Heart left ventricle (tissue), 16 donors: ENCODE measurements at regions of chr4 and their contacts with region 1.

Region 1: GRCh38 chr4:2963175-2963965 is at the starts of genes GRK4 and NOP14:
- DNase-seq: peak; percentile 98 to 99 (median 99)
- ATAC-seq: peak; percentile 97 to 99 (median 98)
- H3K4me3 ChIP-seq: peak within 1 kb of the TSS; percentile 70 to 100 (median 84)
- H3K27ac ChIP-seq: peak within 1 kb of the TSS; percentile 60 to 92 (median 85)
- H3K4me1 ChIP-seq: peaks cover 4 to 30% (median 23%) of the 10 kb centered on the region in 12 donors
- H3K27me3 ChIP-seq: no peaks in the 10 kb centered on the region
- CTCF ChIP-seq: peak in 9 of 12 donors; percentile 3 to 72 (median 37)
- POLR2A ChIP-seq: peak in 1 of 2 donors; percentile 67
- total RNA-seq, gene GRK4: 4.9 to 11.8 (median 9.3) TPM
- total RNA-seq, gene NOP14: 11.4 to 21.5 (median 15.8) TPM

Region 2: DNA sequence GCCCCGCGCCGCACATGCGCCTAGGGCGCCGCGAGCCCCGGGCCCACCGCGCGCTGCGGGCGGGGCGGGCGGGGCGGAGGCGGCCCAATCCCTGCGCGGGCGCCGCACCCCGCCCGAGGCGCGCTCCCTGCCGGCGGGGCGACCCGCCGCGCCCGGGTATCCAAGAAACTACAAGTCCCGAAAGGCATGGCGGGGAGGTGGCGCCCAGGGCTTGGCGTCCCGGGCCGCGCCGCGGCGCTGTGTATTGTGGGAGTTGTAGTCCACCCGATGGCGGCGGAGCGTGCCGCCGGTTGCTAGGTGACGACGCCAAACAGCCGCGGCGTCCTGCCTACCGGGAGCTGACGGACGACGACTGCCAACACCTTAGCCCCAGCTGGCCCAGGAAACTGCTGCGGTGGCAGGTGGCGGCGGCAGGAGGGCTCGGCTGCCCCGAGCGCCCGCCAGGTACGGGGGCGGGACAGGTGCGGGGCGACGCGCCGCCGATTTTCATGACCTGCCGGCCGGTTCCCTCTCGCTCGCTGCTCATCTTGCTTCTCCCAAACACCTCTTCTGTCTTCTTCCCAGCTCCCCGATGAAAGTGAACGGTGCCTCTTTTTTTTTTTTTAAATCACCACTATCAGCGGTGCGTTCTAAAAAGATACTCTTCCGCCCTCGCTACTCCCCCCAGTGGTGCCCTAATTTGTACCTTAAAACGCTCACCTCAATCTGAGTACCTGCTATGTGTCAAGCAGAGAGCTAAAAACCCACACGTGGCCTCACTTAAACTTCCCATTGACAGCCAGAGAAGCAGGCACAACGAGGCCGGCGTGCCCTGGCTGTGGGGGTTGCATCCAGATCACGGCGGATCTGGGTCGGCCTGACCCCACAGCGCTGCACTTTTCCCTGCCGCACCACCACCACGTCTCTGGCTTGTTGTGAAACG is 544.5 kb before region 1 on chr4 and contains the start of gene CFAP99:
- intact Hi-C with region 1: loop called in 3 of 10 experiments (anchors 5 to 10 kb)
- DNase-seq: peak; percentile 97 to 99 (median 98)
- ATAC-seq: peak; percentile 95 to 98 (median 96)
- H3K4me3 ChIP-seq: peak within 1 kb of the TSS; percentile 48 to 84 (median 70)
- H3K27ac ChIP-seq: peak within 1 kb of the TSS in 7 of 12 donors; percentile 15 to 39 (median 24)
- H3K4me1 ChIP-seq: peaks cover 5 to 42% (median 22%) of the 10 kb centered on the region in 12 donors
- H3K27me3 ChIP-seq: peaks cover 0 to 41% (median 16%) of the 10 kb centered on the region in 9 donors
- CTCF ChIP-seq: peak in 7 of 12 donors; percentile 6 to 45 (median 23)
- POLR2A ChIP-seq: peak in 1 of 2 donors; percentile 3
- total RNA-seq, gene CFAP99: not detected

Region 3: DNA sequence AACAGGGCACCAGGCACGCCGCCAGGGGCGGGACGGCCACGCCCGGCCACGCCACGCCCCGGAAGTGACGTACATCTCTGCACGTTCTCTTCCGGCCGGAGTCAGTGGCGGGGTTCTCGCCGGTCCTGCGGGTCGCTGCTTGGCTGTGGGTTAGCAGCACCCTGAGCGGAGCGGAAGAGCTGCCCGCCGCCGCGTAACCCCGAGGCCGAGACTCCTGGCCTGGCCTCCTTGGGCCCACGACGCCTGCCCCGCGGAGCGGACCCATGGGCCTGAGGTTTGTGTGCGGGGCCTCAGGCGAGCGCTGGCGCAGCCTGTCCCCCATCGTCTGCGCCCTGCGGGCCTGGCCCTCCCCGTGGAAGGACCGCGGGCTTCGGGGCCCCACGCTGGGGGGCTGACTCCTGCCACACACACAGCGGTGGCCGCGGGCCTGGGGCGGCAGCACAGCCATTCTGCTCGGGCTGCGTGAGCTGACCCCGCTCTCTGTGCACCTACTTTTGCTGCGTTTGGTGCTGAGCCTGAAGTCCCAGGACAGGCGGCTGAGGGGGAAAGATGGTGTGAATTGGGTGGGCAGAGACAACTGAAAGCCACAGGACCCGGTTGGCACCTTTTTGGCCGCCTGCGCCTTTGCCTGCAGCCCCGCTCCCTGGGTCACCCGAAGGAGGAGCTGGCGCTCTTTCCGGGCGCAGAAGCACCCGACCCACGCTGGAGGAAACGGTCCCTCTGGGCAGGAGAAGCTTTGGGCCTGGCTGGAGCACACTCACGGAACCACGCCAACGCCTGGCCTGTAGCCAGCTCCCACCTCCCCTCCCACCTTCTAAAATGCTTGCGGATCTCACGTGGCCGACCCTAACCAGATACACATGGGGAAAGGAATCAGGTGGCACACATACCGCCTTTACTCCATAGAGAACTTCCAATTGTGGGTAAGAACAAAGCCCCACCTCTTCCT is 28.3 kb before region 1 on chr4:
- intact Hi-C with region 1: loop called in 1 of 10 experiments (anchors 2 kb)
- DNase-seq: peak; percentile 94 to 98 (median 96)
- ATAC-seq: peak; percentile 54 to 84 (median 83)
- H3K4me3 ChIP-seq: peak overlapping the region; percentile 76 to 100 (median 89)
- H3K27ac ChIP-seq: peak overlapping the region; percentile 68 to 96 (median 88)
- H3K4me1 ChIP-seq: peaks cover 2 to 63% (median 42%) of the 10 kb centered on the region in 12 donors
- H3K27me3 ChIP-seq: no peaks in the 10 kb centered on the region
- CTCF ChIP-seq: peak in 2 of 12 donors; percentile 1 to 26
- POLR2A ChIP-seq: peak; percentile 24 to 92

Region 4: DNA sequence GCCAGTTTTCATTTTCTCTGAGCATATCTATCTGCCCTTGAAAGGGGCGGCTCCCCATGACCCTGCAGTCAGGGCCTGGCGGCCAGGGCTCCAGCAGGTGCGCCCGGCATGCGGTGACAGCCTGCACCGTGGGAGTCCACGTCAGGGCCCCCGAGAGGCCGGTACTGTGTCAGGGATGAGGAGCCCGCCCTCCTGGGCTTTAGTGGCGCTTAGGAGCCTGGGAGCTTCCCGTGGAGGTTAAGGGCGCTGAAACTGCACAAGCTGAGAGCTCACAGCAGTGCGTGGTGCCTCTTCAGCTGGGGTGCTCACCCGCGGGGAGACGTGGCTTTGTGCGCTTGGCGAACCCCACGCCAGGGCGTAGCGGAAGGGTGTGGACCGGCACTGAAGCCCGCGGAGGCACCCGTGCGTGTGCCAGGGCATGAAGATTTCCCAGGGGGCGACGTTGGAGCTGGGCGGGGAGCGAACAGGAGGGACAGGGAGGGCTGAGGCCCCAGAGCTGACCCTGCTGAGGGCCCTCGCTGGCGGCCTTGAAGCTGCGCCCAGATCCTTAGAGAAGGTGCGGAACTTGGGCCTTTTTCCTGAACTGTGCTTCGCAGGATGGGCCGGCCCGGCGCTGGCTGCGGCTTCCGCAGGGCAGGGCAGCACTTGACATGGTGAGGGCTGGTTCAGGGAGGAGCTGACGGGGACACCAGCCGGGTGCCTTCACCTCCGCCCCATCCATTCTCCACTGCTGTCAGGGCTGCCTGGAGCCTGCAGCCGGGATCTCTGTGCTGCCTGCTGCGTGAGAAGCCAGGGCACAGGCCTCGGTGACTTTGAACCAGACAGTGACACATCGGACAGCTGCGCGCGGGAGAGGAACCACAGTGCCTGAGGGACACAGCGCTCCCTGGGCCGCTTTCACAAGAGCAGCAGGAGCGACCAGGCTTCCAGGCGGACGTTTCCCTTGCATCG is 78.1 kb after region 1 on chr4:
- intact Hi-C with region 1: loop called in 3 of 10 experiments (anchors 5 kb)
- DNase-seq: peak; percentile 48 to 81 (median 67)
- ATAC-seq: peak; percentile 23 to 79 (median 58)
- H3K4me3 ChIP-seq: peak overlapping the region; percentile 19 to 63 (median 56)
- H3K27ac ChIP-seq: peak overlapping the region; percentile 36 to 88 (median 70)
- H3K4me1 ChIP-seq: peaks cover 0 to 62% (median 25%) of the 10 kb centered on the region in 12 donors
- H3K27me3 ChIP-seq: no peaks in the 10 kb centered on the region
- CTCF ChIP-seq: no peak
- POLR2A ChIP-seq: no peak